GM10248 (cell line): ENCODE measurements at regions of chr1 and their contacts with region 1.

Region 1: DNA sequence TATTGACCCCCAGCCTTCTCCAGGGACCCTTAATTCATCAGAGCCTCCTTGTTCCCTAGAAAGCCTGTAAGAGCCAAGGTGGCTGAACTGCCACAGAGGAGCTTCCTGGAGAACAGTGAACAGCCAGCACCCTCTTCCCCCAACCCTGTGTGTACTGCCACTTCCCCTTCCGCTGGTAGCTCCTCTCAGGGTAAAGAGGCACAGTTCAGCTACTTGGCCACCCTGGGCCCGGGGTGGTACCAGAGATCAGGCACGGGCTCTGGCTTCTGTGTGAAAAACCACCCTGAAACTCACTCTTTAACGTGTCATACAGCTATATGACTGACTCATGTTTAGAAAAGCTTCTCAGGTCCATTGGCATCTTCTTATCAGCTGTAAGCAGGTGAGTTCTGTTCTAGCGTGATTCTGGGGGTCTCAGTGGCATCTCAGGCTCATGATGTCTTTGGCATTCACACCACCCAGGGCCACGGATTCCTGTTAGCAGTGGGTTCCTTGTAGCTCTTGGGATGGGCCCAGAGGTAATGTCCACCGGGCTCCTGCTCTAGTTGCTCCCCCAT is 22.4 kb downstream of the ARMH1 start:
- DNase-seq: no peak
- CTCF ChIP-seq: no peak

Region 2: GRCh38 chr1:44674113-44675000 is 22.5 kb before region 1 on chr1 and contains the starts of genes ARMH1 and TMEM53:
- CTCF ChIA-PET with region 1: interaction called, 10 read pairs
- POLR2A ChIA-PET with region 1: no interaction called
- DNase-seq: peak; percentile 97
- CTCF ChIP-seq: no peak

Region 3: DNA sequence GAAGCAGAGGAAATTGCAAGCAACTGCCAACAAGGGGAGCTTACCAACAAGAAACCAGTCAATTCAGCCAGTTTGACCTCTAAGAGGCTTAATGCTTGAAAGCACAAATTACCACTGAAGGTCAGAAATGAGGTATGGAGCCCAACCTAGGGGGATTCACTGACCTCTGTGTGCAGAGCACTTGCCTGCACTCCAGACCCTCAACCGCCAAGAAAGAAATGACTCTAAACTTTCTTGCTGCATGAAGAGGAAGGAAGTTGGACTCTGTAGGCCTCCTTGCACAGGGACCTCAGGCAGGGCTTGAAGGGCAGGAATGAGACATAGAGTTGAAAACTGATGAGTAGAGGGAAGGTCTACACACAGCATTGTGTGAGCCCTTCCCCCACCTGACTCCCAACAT is 12.3 kb before region 1 on chr1:
- CTCF ChIA-PET with region 1: interaction called, 14 read pairs
- POLR2A ChIA-PET with region 1: no interaction called
- DNase-seq: peak; percentile 57
- CTCF ChIP-seq: no peak

Region 4: GRCh38 chr1:44707959-44708831 is 11.3 kb after region 1 on chr1:
- CTCF ChIA-PET with region 1: interaction called, 69 read pairs
- POLR2A ChIA-PET with region 1: no interaction called
- DNase-seq: peak; percentile 55
- CTCF ChIP-seq: peak; percentile 63

Region 5: DNA sequence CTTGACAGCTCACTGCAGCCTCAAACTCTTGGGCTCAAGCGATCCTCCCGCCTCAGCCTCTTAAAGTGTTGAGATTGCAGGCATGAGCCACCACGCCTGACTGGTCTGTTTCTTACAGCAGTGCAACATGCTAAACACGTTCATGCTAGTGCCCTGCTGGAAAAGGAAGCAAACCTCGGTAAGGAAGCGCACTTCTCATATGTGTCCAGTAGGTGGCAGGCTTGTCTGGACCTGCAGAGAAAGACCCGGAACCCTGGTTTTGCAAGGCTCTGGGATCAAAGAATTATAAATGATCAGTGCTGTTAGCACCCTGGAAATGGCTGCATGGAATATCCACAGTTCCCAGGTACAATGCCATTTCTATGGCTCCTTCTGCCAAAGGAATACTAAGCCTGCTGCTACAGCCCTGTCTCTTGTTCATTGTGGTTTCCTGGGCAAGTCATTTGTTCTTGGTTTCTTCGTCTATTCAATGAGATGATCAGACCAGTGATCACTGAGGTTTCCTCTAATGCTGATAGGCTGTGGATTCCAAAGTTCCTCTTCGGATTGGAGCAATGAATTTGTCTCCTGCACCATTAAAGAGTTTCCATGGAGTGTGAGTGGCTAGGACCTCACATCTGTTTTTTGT is 18.2 kb after region 1 on chr1:
- CTCF ChIA-PET with region 1: interaction called, 69 read pairs
- POLR2A ChIA-PET with region 1: interaction called, 28 read pairs
- DNase-seq: peak; percentile 77
- CTCF ChIP-seq: peak; percentile 87

Region 6: GRCh38 chr1:46094474-46095005 is 1397.7 kb after region 1 on chr1:
- CTCF ChIA-PET with region 1: no interaction called
- POLR2A ChIA-PET with region 1: interaction called, 11 read pairs
- DNase-seq: no peak
- CTCF ChIP-seq: no peak